HEK293 (cell line): ENCODE measurements at regions of chr7 and their contacts with region 1.

Region 1: GRCh38 chr7:108497082-108497725 is 28.7 kb downstream of the PNPLA8 start:
- H3K4me3 ChIP-seq: no peak overlapping the region
- H3K27ac ChIP-seq: no peak overlapping the region
- H3K4me1 ChIP-seq: no peaks in the 10 kb centered on the region
- CTCF ChIP-seq: peak; percentile 42; the same call in 1 of the 2 replicates

Region 2: GRCh38 chr7:108181073-108181985 is 315.9 kb before region 1 on chr7:
- CTCF ChIA-PET with region 1: interaction called, 15 read pairs
- POLR2A ChIA-PET with region 1: no interaction called
- H3K4me3 ChIP-seq: no peak overlapping the region
- H3K27ac ChIP-seq: no peak overlapping the region
- H3K4me1 ChIP-seq: no peaks in the 10 kb centered on the region
- CTCF ChIP-seq: peak; percentile 45; the same call in 1 of the 2 replicates

Region 3: GRCh38 chr7:108452722-108453121 is 44.5 kb before region 1 on chr7:
- CTCF ChIA-PET with region 1: interaction called, 19 read pairs
- POLR2A ChIA-PET with region 1: no interaction called
- H3K4me3 ChIP-seq: no peak overlapping the region
- H3K27ac ChIP-seq: no peak overlapping the region
- H3K4me1 ChIP-seq: peaks cover 24% of the 10 kb centered on the region
- CTCF ChIP-seq: peak; percentile 22; the same call in 1 of the 2 replicates

Region 4: DNA sequence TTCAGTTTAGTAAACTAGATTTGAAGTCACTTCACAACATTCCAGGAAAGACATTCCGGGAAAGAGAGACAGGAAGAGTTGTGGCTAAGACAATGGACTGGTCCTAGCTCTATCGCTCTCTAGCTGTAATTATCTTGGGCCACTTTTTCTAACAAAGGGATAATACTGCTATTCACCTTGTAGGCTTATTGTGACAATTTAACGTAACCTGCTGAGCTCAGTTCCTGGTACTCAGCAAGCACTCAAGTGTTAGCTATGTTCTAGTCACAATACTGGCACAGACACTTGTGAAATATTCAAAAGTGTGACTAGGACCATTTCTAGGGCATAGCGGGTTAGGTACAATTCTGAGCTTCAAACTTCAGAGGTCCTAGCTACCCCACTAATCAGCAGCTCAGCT is 29.0 kb before region 1 on chr7:
- CTCF ChIA-PET with region 1: interaction called, 14 read pairs
- POLR2A ChIA-PET with region 1: no interaction called
- H3K4me3 ChIP-seq: no peak overlapping the region
- H3K27ac ChIP-seq: no peak overlapping the region
- H3K4me1 ChIP-seq: no peaks in the 10 kb centered on the region
- CTCF ChIP-seq: no peak

Region 5: DNA sequence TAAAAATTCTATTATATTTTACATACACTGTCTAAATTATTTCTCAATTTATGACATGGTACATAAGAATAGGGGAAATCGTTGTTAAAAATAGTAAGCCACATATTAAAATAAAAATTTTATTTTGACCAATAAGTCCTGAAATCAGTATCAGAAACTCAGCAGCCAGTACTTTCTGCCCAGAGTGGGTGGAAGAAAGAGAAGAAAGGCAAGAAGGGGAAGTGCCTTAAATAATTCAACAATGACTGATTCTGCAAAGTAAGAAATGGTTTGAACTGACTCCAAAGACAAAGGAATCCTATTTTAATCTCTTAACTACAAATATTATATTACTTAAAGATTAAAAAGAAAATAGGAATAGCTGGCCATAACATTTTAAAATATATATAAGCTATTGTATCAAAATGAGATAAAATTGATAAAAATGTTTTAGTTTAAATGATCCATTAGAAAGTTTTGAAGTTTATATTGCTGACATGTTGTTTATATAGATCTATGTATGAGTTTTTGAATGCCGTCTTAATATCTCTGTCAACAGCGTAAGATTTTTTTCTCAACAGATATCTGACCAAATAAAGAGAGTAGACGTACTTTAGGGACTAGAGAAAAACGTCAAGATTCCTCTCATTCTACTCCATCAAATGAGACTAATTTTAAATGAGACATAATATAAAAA is 10.8 kb before region 1 on chr7:
- CTCF ChIA-PET with region 1: interaction called, 13 read pairs
- POLR2A ChIA-PET with region 1: no interaction called
- H3K4me3 ChIP-seq: no peak overlapping the region
- H3K27ac ChIP-seq: no peak overlapping the region
- H3K4me1 ChIP-seq: no peaks in the 10 kb centered on the region
- CTCF ChIP-seq: no peak

Region 6: GRCh38 chr7:108511939-108512338 is 14.7 kb after region 1 on chr7:
- CTCF ChIA-PET with region 1: interaction called, 14 read pairs
- POLR2A ChIA-PET with region 1: no interaction called
- H3K4me3 ChIP-seq: no peak overlapping the region
- H3K27ac ChIP-seq: no peak overlapping the region
- H3K4me1 ChIP-seq: no peaks in the 10 kb centered on the region
- CTCF ChIP-seq: no peak

Region 7: DNA sequence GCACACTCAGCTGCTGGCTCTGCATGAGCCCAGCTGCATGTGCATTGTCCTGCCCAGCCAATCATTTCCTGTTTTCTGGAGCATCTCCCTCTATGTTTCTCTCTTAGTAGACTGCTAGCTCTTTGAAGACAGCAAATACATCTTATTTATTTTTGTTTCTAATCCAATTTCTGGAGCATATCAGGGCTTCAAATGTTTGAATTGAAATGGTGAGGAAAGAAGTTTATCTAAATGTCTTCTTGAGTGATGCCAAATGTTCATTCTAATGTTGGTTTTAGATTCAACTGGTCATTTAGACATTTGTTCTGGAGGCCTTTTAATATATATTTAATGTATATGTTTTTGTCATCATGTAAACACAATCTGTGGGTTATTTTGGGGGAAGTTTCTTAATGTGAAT is 214.4 kb after region 1 on chr7:
- CTCF ChIA-PET with region 1: no interaction called
- POLR2A ChIA-PET with region 1: no interaction called
- H3K4me3 ChIP-seq: no peak overlapping the region
- H3K27ac ChIP-seq: no peak overlapping the region
- H3K4me1 ChIP-seq: no peaks in the 10 kb centered on the region
- CTCF ChIP-seq: no peak